ENCODE measurements at regions of chr14 and their contacts with region 1.

Region 1: DNA sequence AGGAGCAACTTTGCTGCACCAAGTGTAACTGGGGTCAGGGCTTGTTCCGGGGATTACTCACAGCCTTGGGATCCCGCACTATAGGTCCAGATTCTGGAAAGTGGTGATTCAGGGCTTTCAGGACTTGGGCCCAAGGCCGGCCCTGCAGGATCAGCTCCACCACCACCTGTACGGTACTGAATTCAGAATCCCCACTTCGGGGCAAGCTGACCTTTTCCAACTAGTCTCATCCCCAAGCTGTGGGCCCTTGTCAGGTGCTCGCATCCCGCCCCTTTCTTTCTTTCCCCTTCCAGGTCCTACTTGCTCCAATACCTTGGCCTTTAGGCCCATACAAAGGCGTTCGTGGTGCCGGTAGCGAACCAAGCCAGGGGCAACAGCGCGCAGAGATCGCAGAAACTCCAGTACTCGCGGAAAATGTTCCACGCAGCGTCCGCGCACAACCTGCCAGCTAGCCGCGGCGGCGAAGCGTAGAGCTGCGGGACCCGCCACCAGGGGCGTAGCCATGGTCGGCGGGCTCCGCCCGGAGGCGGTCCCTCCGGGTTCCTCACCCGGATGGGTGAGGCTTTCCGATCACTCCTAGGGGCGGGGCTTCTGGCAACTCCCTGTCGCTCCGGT is 487 bp downstream of the TINF2 start:
- DNase-seq: peak in 1 of 2 donors; percentile 94
- H3K4me3 ChIP-seq: peak overlapping the region; percentile 81 to 95
- H3K27ac ChIP-seq: peak overlapping the region; percentile 94 to 99
- H3K4me1 ChIP-seq: peaks cover 15 to 32% of the 10 kb centered on the region in 2 donors
- H3K27me3 ChIP-seq: no peaks in the 10 kb centered on the region
- CTCF ChIP-seq: peak; percentile 54 to 67 (median 56)

Region 2: GRCh38 chr14:24141097-24141880 is 100.6 kb before region 1 on chr14 and contains the start of gene EMC9:
- intact Hi-C with region 1: loop called (anchors 1 kb)
- DNase-seq: peak; percentile 100
- H3K4me3 ChIP-seq: peak within 1 kb of the TSS; percentile 80 to 81
- H3K27ac ChIP-seq: peak within 1 kb of the TSS; percentile 76 to 89
- H3K4me1 ChIP-seq: peaks cover 18 to 39% of the 10 kb centered on the region in 2 donors
- H3K27me3 ChIP-seq: no peaks in the 10 kb centered on the region
- CTCF ChIP-seq: peak; percentile 22 to 74 (median 45)
- total RNA-seq, gene EMC9: 3.4 TPM

Region 3: GRCh38 chr14:24215495-24216344 is 26.2 kb before region 1 on chr14 and contains the start of gene MDP1:
- intact Hi-C with region 1: loop called (anchors 1 kb)
- DNase-seq: peak; percentile 53 to 92
- H3K4me3 ChIP-seq: peak within 1 kb of the TSS; percentile 84 to 88
- H3K27ac ChIP-seq: peak within 1 kb of the TSS; percentile 87 to 93
- H3K4me1 ChIP-seq: peaks cover 3 to 29% of the 10 kb centered on the region in 2 donors
- H3K27me3 ChIP-seq: no peaks in the 10 kb centered on the region
- CTCF ChIP-seq: peak in 2 of 3 experiments; percentile 44 to 60
- total RNA-seq, gene MDP1: 58.8 TPM

Region 4: DNA sequence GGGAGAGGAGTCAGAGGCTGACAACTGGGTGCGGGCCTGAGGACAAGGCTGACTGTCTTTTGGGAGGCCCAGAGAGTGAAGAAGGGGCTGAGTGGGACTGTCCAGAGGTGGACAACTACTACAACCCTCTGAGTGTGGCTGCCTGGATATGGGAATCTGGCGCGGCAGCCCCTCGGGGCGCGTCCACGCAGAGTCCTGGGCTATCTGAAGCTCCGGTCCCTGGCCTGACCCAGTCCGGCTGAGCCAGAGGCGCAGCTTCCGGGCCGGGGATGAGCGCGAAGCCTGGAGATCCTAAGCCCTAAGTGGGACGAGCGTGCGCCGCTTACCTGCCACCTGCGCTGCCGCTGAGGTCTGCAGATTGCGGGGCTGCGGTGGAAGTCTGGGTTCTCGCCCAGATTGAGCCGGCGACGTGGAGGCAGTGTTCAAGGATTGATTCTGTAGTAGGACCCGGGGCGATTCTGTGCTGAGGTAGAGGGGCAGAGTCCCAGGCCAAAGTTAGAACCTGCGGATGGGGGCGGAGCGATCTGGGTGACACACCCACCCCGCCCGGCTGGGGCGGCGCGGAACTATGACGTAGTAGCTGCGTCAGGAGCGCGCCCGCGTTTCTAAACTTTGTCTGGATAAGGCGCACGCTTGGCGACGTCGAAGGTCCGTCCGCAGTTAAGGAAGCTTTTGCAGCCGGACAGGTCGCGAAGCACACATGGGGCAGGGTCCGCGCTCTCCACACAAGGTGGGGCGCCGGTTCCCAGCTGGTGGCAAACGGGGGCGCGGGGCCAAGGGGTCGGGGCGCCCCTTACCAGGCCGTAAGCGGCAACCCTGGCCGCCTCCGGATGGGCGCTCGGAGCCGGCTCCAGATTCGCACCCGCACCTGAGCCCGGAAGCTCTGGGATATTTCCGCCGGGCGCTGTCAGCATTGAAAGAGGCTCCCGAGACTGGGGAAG is 57.6 kb after region 1 on chr14 and contains the starts of genes DHRS1 and NOP9:
- intact Hi-C with region 1: loop called (anchors 1 kb)
- DNase-seq: peak; percentile 48 to 96
- H3K4me3 ChIP-seq: peak within 1 kb of the TSS; percentile 51 to 84
- H3K27ac ChIP-seq: peak within 1 kb of the TSS; percentile 64 to 67
- H3K4me1 ChIP-seq: peaks cover 3 to 12% of the 10 kb centered on the region in 2 donors
- H3K27me3 ChIP-seq: no peaks in the 10 kb centered on the region
- CTCF ChIP-seq: no peak
- total RNA-seq, gene DHRS1: 100 TPM
- total RNA-seq, gene NOP9: 33.5 TPM

Region 5: DNA sequence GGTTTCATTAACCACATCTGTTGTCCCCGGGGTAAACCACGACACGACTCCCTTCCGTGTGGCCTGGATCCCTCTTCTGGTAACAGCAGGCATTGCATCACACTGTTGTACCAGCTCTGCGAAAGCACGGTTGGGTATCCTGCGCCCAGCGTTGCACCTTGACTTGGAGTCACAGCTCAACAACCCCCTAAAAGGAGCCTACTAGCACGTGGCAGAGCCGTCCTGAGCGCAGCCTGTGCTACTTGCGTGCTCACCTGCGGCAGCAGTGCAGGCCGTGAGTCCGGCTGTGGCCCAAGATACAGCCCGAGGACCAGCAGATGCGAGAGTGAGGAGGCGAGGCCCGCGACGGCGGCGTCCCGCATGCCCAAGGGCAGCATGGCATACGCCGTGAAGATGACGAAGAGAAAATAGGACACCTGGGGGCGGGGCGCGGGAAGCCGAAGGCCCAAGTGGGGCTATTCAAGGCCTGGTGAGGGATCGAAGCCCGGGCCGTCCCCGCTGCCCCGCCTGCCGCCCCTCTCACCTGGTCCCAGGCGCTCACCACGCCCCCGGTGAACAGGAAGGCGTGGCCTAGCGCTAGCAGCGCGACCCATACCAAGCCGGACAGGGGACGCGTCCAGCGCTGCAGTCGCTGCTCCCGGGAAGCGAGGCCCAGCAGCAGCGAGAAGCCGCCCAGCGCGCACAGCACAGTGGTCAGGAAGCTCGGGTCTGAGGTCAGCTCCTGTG is 90.5 kb after region 1 on chr14:
- intact Hi-C with region 1: loop called (anchors 1 kb)
- DNase-seq: peak in 1 of 2 donors; percentile 86
- H3K4me3 ChIP-seq: peak overlapping the region; percentile 42 to 53
- H3K27ac ChIP-seq: no peak overlapping the region
- H3K4me1 ChIP-seq: peaks cover 7 to 20% of the 10 kb centered on the region in 2 donors
- H3K27me3 ChIP-seq: peaks cover 12% of the 10 kb centered on the region
- CTCF ChIP-seq: peak; percentile 61 to 77 (median 74)

Region 6: GRCh38 chr14:24418492-24418873 is 176.5 kb after region 1 on chr14:
- intact Hi-C with region 1: no loop called
- DNase-seq: peak in 1 of 2 donors; percentile 63
- H3K4me3 ChIP-seq: no peak overlapping the region
- H3K27ac ChIP-seq: no peak overlapping the region
- H3K4me1 ChIP-seq: peaks cover 0 to 3% of the 10 kb centered on the region in 2 donors
- H3K27me3 ChIP-seq: no peaks in the 10 kb centered on the region
- CTCF ChIP-seq: no peak

Region 7: DNA sequence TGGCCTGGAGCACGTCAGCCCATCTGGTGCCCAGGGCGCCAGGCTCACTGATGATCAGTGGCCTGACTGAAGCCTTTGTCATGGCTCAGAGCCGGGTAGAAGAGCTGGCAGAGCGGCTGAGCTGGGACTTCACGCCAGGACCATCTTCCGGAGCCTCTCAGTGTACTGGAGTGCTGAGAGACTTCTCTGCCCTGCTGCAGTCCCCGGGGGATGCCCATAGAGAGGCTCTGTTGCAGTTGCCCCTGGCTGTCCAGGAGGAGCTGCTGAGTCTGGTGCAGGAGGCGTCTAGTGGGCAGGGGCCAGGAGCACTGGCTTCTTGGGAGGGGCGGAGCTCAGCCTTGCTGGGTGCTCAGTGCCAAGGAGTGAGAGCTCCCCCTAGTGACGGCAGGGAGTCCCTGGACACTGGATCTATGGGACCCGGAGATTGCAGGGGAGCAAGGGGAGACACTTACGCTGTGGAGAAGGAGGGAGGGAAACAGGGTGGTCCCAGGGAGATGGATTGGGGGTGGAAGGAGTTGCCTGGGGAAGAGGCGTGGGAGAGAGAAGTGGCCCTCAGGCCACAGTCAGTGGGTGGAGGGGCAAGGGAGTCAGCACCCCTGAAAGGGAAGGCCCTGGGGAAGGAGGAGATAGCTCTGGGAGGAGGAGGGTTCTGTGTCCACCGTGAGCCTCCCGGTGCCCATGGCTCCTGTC is 189.8 kb after region 1 on chr14:
- intact Hi-C with region 1: loop called (anchors 5 kb)
- DNase-seq: peak; percentile 70 to 93
- H3K4me3 ChIP-seq: peak overlapping the region; percentile 78 to 92
- H3K27ac ChIP-seq: peak overlapping the region; percentile 88 to 96
- H3K4me1 ChIP-seq: peaks cover 5 to 27% of the 10 kb centered on the region in 2 donors
- H3K27me3 ChIP-seq: no peaks in the 10 kb centered on the region
- CTCF ChIP-seq: peak; percentile 84 to 92 (median 85)